ENCODE measurements at regions of chr10 and their contacts with region 1.

Region 1: DNA sequence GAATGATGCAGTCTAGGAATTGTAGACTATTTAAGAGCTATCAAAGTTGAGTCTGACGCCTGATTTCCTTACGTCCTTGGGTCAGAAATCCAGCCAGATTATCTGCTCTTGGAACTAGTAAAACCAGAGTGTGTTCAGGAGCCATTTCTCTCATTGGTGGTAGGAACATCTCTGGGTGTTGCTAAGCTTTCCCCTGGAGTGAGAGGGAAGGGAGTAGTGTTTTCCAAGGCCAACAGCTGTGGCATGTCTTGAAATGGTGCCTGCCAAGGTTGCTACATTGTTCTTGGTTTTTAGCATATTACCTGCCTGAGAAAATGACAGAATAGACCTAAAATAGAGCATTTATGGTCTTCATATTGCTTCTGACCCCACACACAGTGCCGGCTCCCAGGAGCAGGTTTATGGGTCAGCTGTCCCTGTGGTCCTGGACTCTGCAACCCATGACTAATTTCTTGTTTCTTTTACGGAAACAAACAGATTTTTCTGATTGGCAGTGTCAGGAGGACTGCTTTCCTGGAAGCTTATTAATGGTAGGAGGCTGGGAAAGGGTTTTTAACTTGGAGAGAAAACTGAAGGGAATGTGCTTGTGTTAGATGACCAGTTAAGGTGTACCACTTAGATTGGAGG is 17.5 kb downstream of the GBF1 start:
- DNase-seq: no peak
- ATAC-seq: no peak
- H3K4me3 ChIP-seq: no peak overlapping the region
- H3K4me3 Mint-ChIP-seq: no peak overlapping the region
- H3K27ac ChIP-seq: no peak overlapping the region
- H3K27ac Mint-ChIP-seq: no peak overlapping the region
- H3K4me1 ChIP-seq: peaks cover 0 to 2% of the 10 kb centered on the region in 2 experiments
- H3K4me1 Mint-ChIP-seq: peaks cover 40 to 51% (median 50%) of the 10 kb centered on the region in 3 donors
- H3K27me3 ChIP-seq: no peaks in the 10 kb centered on the region
- H3K27me3 Mint-ChIP-seq: no peaks in the 10 kb centered on the region

Region 2: GRCh38 chr10:102450194-102450938 is 187.5 kb after region 1 on chr10:
- CTCF ChIA-PET with region 1: no interaction called
- POLR2A ChIA-PET with region 1: no interaction called
- DNase-seq: peak; percentile 78 to 97 (median 90)
- ATAC-seq: peak; percentile 86 to 92 (median 90)
- H3K4me3 ChIP-seq: peak overlapping the region; percentile 89 to 93
- H3K4me3 Mint-ChIP-seq: peak overlapping the region; percentile 93 to 94 (median 93)
- H3K27ac ChIP-seq: peak overlapping the region; percentile 88
- H3K27ac Mint-ChIP-seq: peak overlapping the region; percentile 90 to 93
- H3K4me1 ChIP-seq: peaks cover 6 to 30% of the 10 kb centered on the region in 2 experiments
- H3K4me1 Mint-ChIP-seq: peaks cover 25 to 27% (median 26%) of the 10 kb centered on the region in 3 donors
- H3K27me3 ChIP-seq: no peaks in the 10 kb centered on the region
- H3K27me3 Mint-ChIP-seq: no peaks in the 10 kb centered on the region

Region 3: DNA sequence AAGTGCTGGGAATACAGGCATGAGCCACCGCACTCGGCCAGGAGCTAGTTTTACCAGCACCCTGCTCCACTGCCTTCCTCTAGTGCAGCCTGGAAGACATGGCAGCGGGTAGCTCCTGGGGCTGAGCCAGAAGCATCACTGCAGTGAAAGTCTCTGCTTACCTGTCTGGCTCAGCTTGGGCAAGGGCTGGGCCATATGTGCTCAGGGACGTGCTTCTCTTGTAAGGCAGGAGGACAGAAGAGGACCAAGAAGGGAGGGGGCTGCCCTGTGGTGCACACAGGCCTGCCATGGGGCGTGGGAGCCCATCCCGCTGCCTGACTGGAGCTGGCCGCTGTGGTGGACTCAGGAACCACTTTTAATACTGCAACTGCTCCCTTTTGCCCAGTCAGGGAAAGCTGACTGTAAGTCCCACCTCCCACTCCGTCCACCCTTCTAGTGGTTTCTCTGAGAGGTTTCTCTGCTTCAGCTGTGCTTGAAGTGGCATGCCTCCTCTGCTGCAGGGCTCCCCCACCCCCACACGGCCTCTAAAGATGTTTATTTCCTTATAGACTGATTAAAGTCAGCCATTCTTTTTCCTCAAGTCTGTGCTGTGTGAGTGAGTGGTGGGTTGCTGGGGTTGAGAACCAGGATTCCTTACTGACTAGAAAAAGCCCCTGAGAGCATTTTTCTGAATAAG is 213.7 kb after region 1 on chr10:
- CTCF ChIA-PET with region 1: interaction called in 1 of 2 experiments, 10 read pairs
- POLR2A ChIA-PET with region 1: no interaction called
- DNase-seq: peak in 16 of 35 experiments; percentile 12 to 51 (median 32)
- ATAC-seq: no peak
- H3K4me3 ChIP-seq: no peak overlapping the region
- H3K4me3 Mint-ChIP-seq: no peak overlapping the region
- H3K27ac ChIP-seq: peak overlapping the region; percentile 13
- H3K27ac Mint-ChIP-seq: peak overlapping the region; percentile 69 to 73
- H3K4me1 ChIP-seq: peaks cover 22 to 49% of the 10 kb centered on the region in 2 experiments
- H3K4me1 Mint-ChIP-seq: peaks cover 27 to 33% (median 29%) of the 10 kb centered on the region in 3 donors
- H3K27me3 ChIP-seq: no peaks in the 10 kb centered on the region
- H3K27me3 Mint-ChIP-seq: no peaks in the 10 kb centered on the region

Region 4: GRCh38 chr10:103685880-103686669 is 1423.2 kb after region 1 on chr10:
- CTCF ChIA-PET with region 1: no interaction called
- POLR2A ChIA-PET with region 1: no interaction called
- DNase-seq: peak; percentile 30 to 86 (median 68)
- ATAC-seq: peak; percentile 85 to 90 (median 88)
- H3K4me3 ChIP-seq: no peak overlapping the region
- H3K4me3 Mint-ChIP-seq: no peak overlapping the region
- H3K27ac ChIP-seq: no peak overlapping the region
- H3K27ac Mint-ChIP-seq: peak overlapping the region in 1 of 2 donors; percentile 41
- H3K4me1 ChIP-seq: no peaks in the 10 kb centered on the region
- H3K4me1 Mint-ChIP-seq: peaks cover 0 to 3% (median 0%) of the 10 kb centered on the region in 3 donors
- H3K27me3 ChIP-seq: no peaks in the 10 kb centered on the region
- H3K27me3 Mint-ChIP-seq: no peaks in the 10 kb centered on the region